Dorsolateral prefrontal cortex (tissue), 120 donors: ENCODE measurements at regions of chr13 and their contacts with region 1.

Region 1: DNA sequence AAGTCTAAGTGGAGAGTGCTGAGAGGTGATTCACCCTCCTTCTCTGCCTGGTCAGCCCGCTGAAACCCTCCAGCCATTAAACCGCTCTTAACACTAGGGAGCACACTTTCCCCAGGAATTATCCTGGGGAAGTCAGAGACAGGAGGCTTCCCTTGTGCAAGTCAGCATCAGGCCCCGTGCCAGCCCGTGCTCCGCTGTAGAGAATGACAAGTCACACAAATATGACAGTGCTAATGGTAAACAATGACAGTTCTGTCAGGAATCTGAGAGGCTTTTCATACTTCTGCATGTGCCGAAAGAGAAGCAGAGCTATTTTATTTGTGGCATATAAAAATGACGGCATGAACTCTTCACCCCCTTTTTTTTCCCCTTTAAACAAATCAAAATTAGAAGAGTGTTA is 816.9 kb upstream of the SLC10A2 start:
- DNase-seq: peak; percentile 64 to 95 (median 90)
- H3K4me3 ChIP-seq: peak overlapping the region in 55 of 59 donors; percentile 3 to 61 (median 38)
- H3K27ac ChIP-seq: peak overlapping the region in 53 of 59 donors; percentile 12 to 85 (median 64)
- H3K27me3 ChIP-seq: no peaks in the 10 kb centered on the region
- CTCF ChIP-seq: peak; percentile 18 to 85 (median 70)

Region 2: GRCh38 chr13:104045907-104046306 is 162.7 kb after region 1 on chr13:
- intact Hi-C with region 1: loop called in 1 of 2 experiments (anchors 5 kb)
- DNase-seq: no peak
- H3K4me3 ChIP-seq: no peak overlapping the region
- H3K27ac ChIP-seq: no peak overlapping the region
- H3K27me3 ChIP-seq: no peaks in the 10 kb centered on the region
- CTCF ChIP-seq: no peak

Region 3: DNA sequence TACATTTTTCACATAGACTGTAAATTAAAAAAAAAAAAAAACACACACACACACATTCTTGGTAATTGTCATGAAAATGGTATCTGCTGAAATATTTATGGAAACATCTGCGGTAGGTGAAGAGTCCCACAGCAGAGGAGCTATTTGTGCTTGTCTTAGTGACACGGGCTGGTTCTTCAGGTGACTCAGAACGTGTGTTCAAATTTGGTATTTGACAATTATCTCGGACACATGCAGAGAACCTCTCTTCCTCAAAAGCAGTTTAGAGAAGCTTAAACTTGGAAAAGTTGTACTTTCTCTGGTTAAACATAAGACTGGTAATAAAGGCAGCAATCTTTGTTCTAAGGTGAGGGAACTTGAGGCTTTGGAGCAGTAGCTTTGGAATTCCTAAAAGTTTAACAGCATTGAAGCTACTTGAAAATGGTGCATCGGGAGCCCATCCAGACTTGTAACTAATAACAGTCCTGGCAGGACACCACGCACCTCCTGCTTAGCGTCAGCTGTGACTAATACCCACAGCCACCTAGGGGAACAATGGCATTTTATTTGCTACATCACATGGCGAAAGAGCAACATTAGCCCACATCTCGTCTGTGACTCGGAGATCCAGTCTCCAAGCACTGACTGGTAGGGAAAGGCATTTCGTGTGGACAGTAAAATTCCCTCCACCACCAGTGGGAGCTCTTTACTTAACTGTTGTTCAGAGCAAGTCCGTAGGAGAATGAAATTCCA is 688.2 kb after region 1 on chr13:
- intact Hi-C with region 1: loop called in 1 of 2 experiments (anchors 10 kb)
- DNase-seq: peak in 9 of 10 donors; percentile 52 to 93 (median 70)
- H3K4me3 ChIP-seq: peak overlapping the region in 48 of 59 donors; percentile 4 to 55 (median 32)
- H3K27ac ChIP-seq: peak overlapping the region in 12 of 59 donors; percentile 2 to 74 (median 40)
- H3K27me3 ChIP-seq: no peaks in the 10 kb centered on the region
- CTCF ChIP-seq: peak; percentile 54 to 87 (median 78)

Region 4: GRCh38 chr13:105202354-105202753 is 1319.2 kb after region 1 on chr13:
- intact Hi-C with region 1: loop called in 1 of 2 experiments (anchors 10 kb)
- DNase-seq: no peak
- H3K4me3 ChIP-seq: no peak overlapping the region
- H3K27ac ChIP-seq: no peak overlapping the region
- H3K27me3 ChIP-seq: no peaks in the 10 kb centered on the region
- CTCF ChIP-seq: peak; percentile 26 to 83 (median 64)